IMR-90 (cell line): ENCODE measurements at regions of chr5 and their contacts with region 1.

Region 1: DNA sequence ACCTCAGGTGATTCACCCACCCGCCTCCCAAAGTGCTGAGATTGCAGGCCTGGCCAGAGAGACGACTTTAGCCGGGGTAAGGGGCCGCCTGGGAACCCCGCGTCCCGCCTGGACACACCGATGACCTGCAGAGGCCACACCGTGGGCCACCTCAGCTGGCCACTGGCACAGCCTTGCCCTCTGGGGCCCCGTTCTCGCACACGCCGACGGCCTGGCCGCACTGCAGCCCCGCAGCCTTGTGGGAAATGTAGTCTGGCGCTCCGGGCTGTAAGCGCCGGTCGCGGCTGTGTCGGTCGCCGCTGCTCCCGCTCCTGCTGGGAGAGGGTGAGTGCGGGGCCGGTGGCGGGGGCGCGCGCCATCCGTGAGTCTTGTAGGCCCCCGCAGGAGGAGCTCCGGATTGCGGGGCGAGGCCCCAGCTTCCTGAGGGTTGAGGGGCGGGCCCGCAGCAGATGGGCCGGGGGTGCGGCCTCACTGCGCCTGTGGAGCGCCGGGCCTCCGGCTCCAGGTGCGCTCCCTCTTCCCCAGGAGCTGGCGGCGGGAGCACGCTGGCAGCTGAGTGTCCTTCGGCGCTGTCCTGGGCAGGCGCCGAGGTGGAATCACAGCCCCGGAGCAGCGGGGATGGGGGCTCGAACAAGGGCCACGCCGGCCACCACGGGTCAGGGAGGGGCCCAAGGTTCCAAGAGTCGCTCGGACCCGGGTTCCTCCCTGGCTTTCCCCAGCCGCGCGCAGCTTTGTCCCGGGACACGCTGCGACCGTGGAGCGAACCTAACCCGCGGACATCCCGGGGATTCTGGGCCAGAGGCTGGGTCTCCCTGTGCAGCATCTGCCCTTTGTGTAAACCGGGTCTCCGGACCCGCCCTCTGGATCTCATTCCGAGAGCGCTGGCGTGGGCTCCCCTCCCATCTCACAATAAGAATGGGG is at the start of gene ZFP2:
- DNase-seq: peak; percentile 27
- ATAC-seq: peak; percentile 98
- H3K4me3 ChIP-seq: peak within 1 kb of the TSS; percentile 57
- H3K27ac ChIP-seq: no peak within 1 kb of the TSS; the same call in 1 of the 2 replicates
- H3K4me1 ChIP-seq: no peaks in the 10 kb centered on the region
- H3K27me3 ChIP-seq: no peaks in the 10 kb centered on the region
- CTCF ChIP-seq: no peak
- POLR2A ChIP-seq: no peak
- RAD21 ChIP-seq: no peak
- total RNA-seq, gene ZFP2: 0.18 and 0.56 TPM in 2 replicates

Region 2: DNA sequence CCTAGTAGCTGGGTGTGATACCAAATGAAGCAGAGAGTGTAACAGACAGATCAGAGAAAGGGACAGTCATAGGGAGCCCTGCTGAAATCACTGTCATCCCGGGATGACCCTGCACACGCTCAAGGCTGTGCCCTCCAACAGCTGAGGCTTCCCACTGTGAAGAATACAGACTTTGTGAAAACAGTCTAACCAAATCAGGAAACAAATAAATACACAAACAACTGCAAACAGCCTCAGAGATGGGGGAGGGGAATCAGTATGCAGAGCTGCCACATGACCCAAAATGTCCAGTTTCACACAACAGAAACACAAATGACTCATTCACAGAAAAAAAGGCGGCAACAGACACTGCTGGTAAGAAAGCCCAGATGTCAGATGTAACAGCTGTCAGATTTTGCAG is 347.4 kb after region 1 on chr5:
- CTCF ChIA-PET with region 1: no interaction called
- POLR2A ChIA-PET with region 1: no interaction called
- dilution Hi-C with region 1: no loop called
- in situ Hi-C with region 1: no loop called
- intact Hi-C with region 1: no loop called
- DNase-seq: peak; percentile 76
- ATAC-seq: peak; percentile 66
- H3K4me3 ChIP-seq: no peak overlapping the region
- H3K27ac ChIP-seq: peak overlapping the region; percentile 34; the same call in 1 of the 2 replicates
- H3K4me1 ChIP-seq: peaks cover 3% of the 10 kb centered on the region
- H3K27me3 ChIP-seq: no peaks in the 10 kb centered on the region
- CTCF ChIP-seq: no peak
- POLR2A ChIP-seq: no peak
- RAD21 ChIP-seq: no peak

Region 3: GRCh38 chr5:179422213-179422855 is 526.4 kb after region 1 on chr5:
- CTCF ChIA-PET with region 1: no interaction called
- POLR2A ChIA-PET with region 1: no interaction called
- dilution Hi-C with region 1: no loop called
- in situ Hi-C with region 1: no loop called
- intact Hi-C with region 1: loop called (anchors 5 kb)
- DNase-seq: no peak
- ATAC-seq: no peak
- H3K4me3 ChIP-seq: no peak overlapping the region
- H3K27ac ChIP-seq: no peak overlapping the region
- H3K4me1 ChIP-seq: no peaks in the 10 kb centered on the region
- H3K27me3 ChIP-seq: peaks cover 11% of the 10 kb centered on the region
- CTCF ChIP-seq: no peak
- POLR2A ChIP-seq: no peak
- RAD21 ChIP-seq: no peak